Gastrocnemius medialis (tissue), 4 donors: ENCODE measurements at regions of chr11 and their contacts with region 1.

Region 1: GRCh38 chr11:73184953-73185671 is 33.0 kb upstream of the P2RY2 start:
- DNase-seq: peak; percentile 61 to 80
- ATAC-seq: peak; percentile 57 to 68
- H3K4me3 ChIP-seq: no peak overlapping the region
- H3K27ac ChIP-seq: peak overlapping the region; percentile 53 to 79 (median 70)
- H3K4me1 ChIP-seq: peaks cover 35 to 47% of the 10 kb centered on the region in 2 donors
- H3K27me3 ChIP-seq: no peaks in the 10 kb centered on the region
- CTCF ChIP-seq: peak; percentile 88 to 94 (median 93)
- POLR2A ChIP-seq: no peak

Region 2: GRCh38 chr11:72831513-72832300 is 353.4 kb before region 1 on chr11:
- in situ Hi-C with region 1: loop called in 1 of 4 experiments (anchors 5 kb)
- intact Hi-C with region 1: no loop called
- DNase-seq: peak; percentile 64 to 82
- ATAC-seq: peak; percentile 79 to 91
- H3K4me3 ChIP-seq: no peak overlapping the region
- H3K27ac ChIP-seq: peak overlapping the region; percentile 69 to 85 (median 80)
- H3K4me1 ChIP-seq: peaks cover 31 to 50% of the 10 kb centered on the region in 2 donors
- H3K27me3 ChIP-seq: no peaks in the 10 kb centered on the region
- CTCF ChIP-seq: peak; percentile 94 to 97 (median 96)
- POLR2A ChIP-seq: no peak

Region 3: DNA sequence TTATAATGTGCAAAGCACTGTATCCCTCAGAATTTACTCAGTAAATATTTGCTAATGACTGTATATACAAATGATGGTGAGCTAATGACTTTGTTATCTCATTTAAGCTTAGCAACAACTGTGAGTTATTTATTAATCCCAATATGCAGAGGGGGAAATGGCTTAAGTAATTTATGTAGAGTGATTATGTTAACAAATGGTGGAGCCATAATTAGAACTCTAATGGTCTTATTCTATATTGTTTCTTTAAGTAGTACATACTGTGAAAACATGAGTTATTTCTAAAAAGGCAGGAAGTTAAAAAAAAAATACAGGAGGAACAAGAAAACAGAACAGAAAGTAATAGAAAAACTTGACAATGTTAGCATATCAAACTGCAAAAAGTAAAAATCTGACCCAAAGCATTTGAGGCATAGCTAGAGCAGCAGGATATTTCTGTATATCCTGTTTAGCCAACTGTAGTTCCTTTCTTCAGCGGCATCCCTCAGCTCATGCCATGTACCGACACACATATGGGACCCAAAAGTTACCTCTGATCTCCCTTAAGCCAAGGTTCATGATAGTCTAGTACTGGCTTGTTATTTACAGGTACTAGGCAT is 137.2 kb before region 1 on chr11:
- in situ Hi-C with region 1: no loop called
- intact Hi-C with region 1: no loop called
- DNase-seq: no peak
- ATAC-seq: no peak
- H3K4me3 ChIP-seq: no peak overlapping the region
- H3K27ac ChIP-seq: no peak overlapping the region
- H3K4me1 ChIP-seq: peaks cover 0 to 9% of the 10 kb centered on the region in 2 donors
- H3K27me3 ChIP-seq: no peaks in the 10 kb centered on the region
- CTCF ChIP-seq: no peak
- POLR2A ChIP-seq: no peak

Region 4: GRCh38 chr11:73242251-73243079 is 57.4 kb after region 1 on chr11:
- in situ Hi-C with region 1: loop called (anchors 5 kb)
- intact Hi-C with region 1: loop called (anchors 1 kb)
- DNase-seq: peak; percentile 45 to 75
- ATAC-seq: peak; percentile 8 to 25
- H3K4me3 ChIP-seq: peak overlapping the region in 1 of 4 donors; percentile 12
- H3K27ac ChIP-seq: peak overlapping the region; percentile 92 to 98 (median 96)
- H3K4me1 ChIP-seq: peaks cover 44 to 52% of the 10 kb centered on the region in 2 donors
- H3K27me3 ChIP-seq: no peaks in the 10 kb centered on the region
- CTCF ChIP-seq: peak; percentile 90 to 93 (median 91)
- POLR2A ChIP-seq: no peak

Region 5: GRCh38 chr11:73288873-73289707 is 104.0 kb after region 1 on chr11:
- in situ Hi-C with region 1: loop called in 3 of 4 experiments (anchors 5 to 10 kb)
- intact Hi-C with region 1: loop called (anchors 1 kb)
- DNase-seq: peak; percentile 48 to 64
- ATAC-seq: peak; percentile 78 to 80
- H3K4me3 ChIP-seq: peak overlapping the region; percentile 23 to 52 (median 28)
- H3K27ac ChIP-seq: peak overlapping the region in 3 of 4 donors; percentile 31 to 61 (median 50)
- H3K4me1 ChIP-seq: peaks cover 3 to 5% of the 10 kb centered on the region in 2 donors
- H3K27me3 ChIP-seq: no peaks in the 10 kb centered on the region
- CTCF ChIP-seq: peak; percentile 90 to 96 (median 94)
- POLR2A ChIP-seq: no peak

Region 6: GRCh38 chr11:73335204-73335923 is 150.3 kb after region 1 on chr11:
- in situ Hi-C with region 1: no loop called
- intact Hi-C with region 1: loop called (anchors 5 kb)
- DNase-seq: peak; percentile 47 to 76
- ATAC-seq: peak; percentile 74 to 86
- H3K4me3 ChIP-seq: no peak overlapping the region
- H3K27ac ChIP-seq: peak overlapping the region; percentile 27 to 59 (median 45)
- H3K4me1 ChIP-seq: peaks cover 10 to 12% of the 10 kb centered on the region in 2 donors
- H3K27me3 ChIP-seq: no peaks in the 10 kb centered on the region
- CTCF ChIP-seq: peak; percentile 76 to 100 (median 88)
- POLR2A ChIP-seq: no peak